Right ventricle myocardium superior (tissue), 1 donor: ENCODE measurements at regions of chr7 and their contacts with region 1.

Region 1: DNA sequence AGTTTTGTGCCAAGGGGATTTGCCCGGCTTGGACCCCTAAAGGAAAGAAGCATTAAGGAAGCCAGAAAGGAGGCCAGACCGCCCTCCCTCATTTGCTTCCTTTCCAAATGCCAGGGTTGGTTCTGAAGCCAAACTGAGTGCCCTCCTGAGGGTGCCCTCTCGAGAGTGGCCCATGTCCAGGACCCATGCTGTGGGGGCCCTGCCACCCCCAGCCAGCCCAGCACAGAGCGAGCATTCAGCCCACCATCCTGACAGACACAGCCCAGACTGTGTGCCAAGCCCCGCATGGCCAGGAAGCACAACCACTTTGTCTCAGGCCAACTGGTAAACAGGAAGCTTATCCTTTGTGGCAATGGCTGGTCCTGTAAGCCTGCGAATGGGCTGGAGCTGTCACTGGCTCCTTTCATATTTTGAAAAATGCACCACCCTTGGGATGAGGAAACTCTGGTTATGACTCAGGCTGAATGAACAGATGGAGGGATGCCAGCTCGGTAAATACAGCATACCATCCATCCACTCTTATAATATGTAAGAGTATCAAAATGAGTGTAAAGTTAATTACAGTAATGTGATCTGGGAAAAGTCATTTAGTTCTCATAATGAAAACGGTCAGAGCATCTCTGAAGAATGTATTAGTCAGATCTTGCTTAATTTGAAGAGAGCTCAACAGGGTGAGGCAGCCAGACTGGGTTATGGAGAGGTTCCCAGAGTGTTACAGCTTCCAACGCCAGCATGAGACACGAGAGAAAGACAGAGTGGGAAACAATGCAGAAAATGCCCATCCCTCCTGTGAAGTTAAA is 65.0 kb downstream of the STK17A start:
- DNase-seq: peak; percentile 72
- ATAC-seq: peak; percentile 77

Region 2: GRCh38 chr7:43693687-43694398 is 46.0 kb after region 1 on chr7:
- intact Hi-C with region 1: loop called (anchors 10 kb)
- DNase-seq: no peak
- ATAC-seq: no peak